Cardiac septum (tissue), 1 donor: ENCODE measurements at regions of chr20 and their contacts with region 1.

Region 1: DNA sequence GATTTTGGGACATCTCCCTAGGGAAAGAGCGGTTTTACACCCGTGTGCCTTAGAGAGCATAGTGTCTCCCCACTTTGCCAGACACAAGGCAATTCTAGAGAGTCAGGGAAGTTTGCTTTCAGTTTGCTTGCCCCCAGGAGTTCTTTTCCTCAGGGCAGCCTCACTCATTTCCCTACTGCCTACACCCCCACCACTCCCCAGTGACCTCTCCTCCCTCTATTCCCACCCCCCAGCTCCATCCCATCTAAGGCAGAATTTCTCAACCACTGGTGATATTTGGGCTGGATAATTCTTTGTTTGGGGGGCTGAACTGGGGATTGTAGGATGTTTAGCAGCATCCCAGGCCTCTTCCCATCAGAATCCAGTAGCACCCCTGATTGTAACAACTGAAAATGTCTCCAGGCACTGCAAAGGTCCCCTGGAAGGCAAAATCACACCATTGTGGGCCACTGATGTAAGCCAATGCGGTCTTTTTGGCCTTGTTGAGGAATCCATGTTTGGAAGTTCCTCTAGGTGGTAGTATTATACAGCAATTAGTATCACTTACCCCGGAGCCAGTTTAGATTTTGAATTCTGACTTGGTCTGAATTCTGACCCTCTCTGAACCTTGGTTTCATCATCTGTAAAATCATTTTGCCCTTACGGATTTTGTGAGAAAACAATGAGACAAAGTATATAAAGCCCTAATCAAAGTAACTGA is 1.3 kb downstream of the EPPIN start:
- DNase-seq: no peak

Region 2: GRCh38 chr20:45450097-45450818 is 95.6 kb before region 1 on chr20:
- intact Hi-C with region 1: no loop called
- DNase-seq: no peak

Region 3: GRCh38 chr20:45592574-45593189 is 46.8 kb after region 1 on chr20:
- intact Hi-C with region 1: no loop called
- DNase-seq: no peak

Region 4: GRCh38 chr20:45771182-45771759 is 225.4 kb after region 1 on chr20:
- intact Hi-C with region 1: loop called (anchors 2 kb)
- DNase-seq: peak; percentile 80